ENCODE measurements at regions of chr13 and their contacts with region 1.

Region 1: GRCh38 chr13:30802953-30803478 is 67.7 kb downstream of the ALOX5AP start:
- DNase-seq: peak; percentile 78
- H3K4me3 Mint-ChIP-seq: peak overlapping the region; percentile 44
- H3K27ac Mint-ChIP-seq: no peak overlapping the region
- H3K4me1 Mint-ChIP-seq: peaks cover 40% of the 10 kb centered on the region
- H3K27me3 Mint-ChIP-seq: no peaks in the 10 kb centered on the region
- CTCF ChIP-seq: peak; percentile 85

Region 2: GRCh38 chr13:30679483-30680330 is 123.3 kb before region 1 on chr13:
- CTCF ChIA-PET with region 1: no interaction called
- intact Hi-C with region 1: loop called (anchors 5 kb)
- DNase-seq: peak; percentile 14
- H3K4me3 Mint-ChIP-seq: no peak overlapping the region
- H3K27ac Mint-ChIP-seq: no peak overlapping the region
- H3K4me1 Mint-ChIP-seq: no peaks in the 10 kb centered on the region
- H3K27me3 Mint-ChIP-seq: no peaks in the 10 kb centered on the region
- CTCF ChIP-seq: no peak

Region 3: GRCh38 chr13:30865123-30866049 is 62.4 kb after region 1 on chr13:
- CTCF ChIA-PET with region 1: interaction called, 3 read pairs
- intact Hi-C with region 1: loop called (anchors 2 kb)
- DNase-seq: peak; percentile 54
- H3K4me3 Mint-ChIP-seq: no peak overlapping the region
- H3K27ac Mint-ChIP-seq: peak overlapping the region; percentile 46
- H3K4me1 Mint-ChIP-seq: peaks cover 29% of the 10 kb centered on the region
- H3K27me3 Mint-ChIP-seq: no peaks in the 10 kb centered on the region
- CTCF ChIP-seq: peak; percentile 68

Region 4: DNA sequence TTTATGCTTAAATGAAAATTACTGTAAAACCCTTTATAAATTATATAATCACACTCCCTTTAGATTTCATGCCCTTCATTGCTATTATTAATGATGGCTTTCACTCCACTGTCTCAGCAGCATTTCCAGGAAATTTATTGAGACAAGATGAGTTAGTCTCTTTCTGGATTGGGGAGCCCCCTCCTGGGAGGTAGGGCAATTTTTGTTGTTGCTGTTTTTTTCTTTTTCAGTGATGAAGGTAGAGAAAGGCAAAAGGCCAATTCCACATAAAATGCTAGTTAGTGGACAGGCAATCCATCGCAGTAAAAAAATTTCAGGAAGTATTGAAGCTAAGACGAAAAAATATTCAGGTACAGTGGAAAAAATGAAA is 209.6 kb after region 1 on chr13:
- CTCF ChIA-PET with region 1: no interaction called
- intact Hi-C with region 1: loop called (anchors 10 kb)
- DNase-seq: peak; percentile 26
- H3K4me3 Mint-ChIP-seq: no peak overlapping the region
- H3K27ac Mint-ChIP-seq: no peak overlapping the region
- H3K4me1 Mint-ChIP-seq: no peaks in the 10 kb centered on the region
- H3K27me3 Mint-ChIP-seq: peaks cover 7% of the 10 kb centered on the region
- CTCF ChIP-seq: no peak

Region 5: DNA sequence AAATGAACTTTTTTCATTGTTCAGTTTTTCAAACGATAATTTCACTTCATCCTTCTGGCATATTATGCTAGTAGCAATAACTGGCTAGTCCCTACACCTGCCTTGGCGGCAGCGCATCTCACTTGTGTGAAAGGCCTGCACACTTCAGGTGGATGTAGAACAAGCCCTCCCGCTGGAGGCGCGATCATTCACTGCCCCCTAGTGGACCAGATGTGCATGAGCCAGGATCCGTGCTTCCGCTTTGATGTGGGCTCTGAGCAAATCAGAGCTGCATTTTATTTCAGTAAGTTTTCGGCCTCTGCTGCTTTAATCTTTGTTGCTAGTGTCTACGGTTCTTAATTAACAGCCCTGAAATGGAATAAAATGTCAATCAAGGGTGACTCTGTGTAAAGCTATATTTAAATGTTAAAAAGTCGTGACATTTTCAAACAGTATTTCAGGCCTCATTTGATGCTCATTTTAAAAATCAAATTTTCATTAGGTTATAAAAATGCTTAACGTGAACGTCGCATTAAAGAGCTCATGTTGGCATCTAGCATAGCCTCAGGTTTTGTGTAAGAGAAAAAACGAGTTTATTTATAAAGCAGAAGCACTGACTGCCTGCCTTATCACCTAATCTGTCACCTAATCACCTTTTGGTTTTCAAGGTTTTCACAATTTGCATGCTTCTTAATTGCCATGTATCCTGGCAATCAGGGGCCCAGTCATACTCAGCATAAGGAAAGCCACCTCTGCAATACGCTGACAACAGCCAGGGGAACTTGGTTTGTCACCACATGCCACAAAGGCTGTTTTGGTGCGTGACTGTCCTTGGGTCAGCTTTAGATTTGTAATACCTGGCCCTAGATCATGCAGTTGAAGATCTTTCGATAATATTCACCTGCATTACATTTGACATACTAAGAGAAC is 241.6 kb after region 1 on chr13:
- CTCF ChIA-PET with region 1: interaction called, 6 read pairs
- intact Hi-C with region 1: loop called (anchors 5 kb)
- DNase-seq: peak; percentile 82
- H3K4me3 Mint-ChIP-seq: no peak overlapping the region
- H3K27ac Mint-ChIP-seq: peak overlapping the region; percentile 92
- H3K4me1 Mint-ChIP-seq: peaks cover 11% of the 10 kb centered on the region
- H3K27me3 Mint-ChIP-seq: no peaks in the 10 kb centered on the region
- CTCF ChIP-seq: peak; percentile 86